ENCODE measurements at regions of chr19 and their contacts with region 1.

Region 1: GRCh38 chr19:2016041-2016807 is 710 bp upstream of the BTBD2 start:
- DNase-seq: peak; percentile 73
- ATAC-seq: peak; percentile 79
- H3K4me3 ChIP-seq: peak overlapping the region; percentile 34 to 37; a peak in 3 of 4 replicates
- H3K27ac ChIP-seq: peak overlapping the region; percentile 64
- H3K4me1 ChIP-seq: peaks cover 7 to 22% of the 10 kb centered on the region in 2 experiments; a peak in 3 of 4 replicates
- H3K27me3 ChIP-seq: no peaks in the 10 kb centered on the region
- CTCF ChIP-seq: no peak
- POLR2A ChIP-seq: no peak
- RAD21 ChIP-seq: no peak

Region 2: GRCh38 chr19:2056182-2056836 is 40.1 kb after region 1 on chr19:
- CTCF ChIA-PET with region 1: interaction called, 4 read pairs
- POLR2A ChIA-PET with region 1: interaction called, 4 read pairs
- RAD21 ChIA-PET with region 1: interaction called in 1 of 2 experiments, 11 read pairs
- intact Hi-C with region 1: no loop called
- DNase-seq: peak; percentile 53
- ATAC-seq: peak; percentile 9; the same call in 1 of the 2 replicates
- H3K4me3 ChIP-seq: peak overlapping the region; percentile 48 to 56
- H3K27ac ChIP-seq: peak overlapping the region; percentile 99
- H3K4me1 ChIP-seq: peaks cover 78 to 96% of the 10 kb centered on the region in 2 experiments
- H3K27me3 ChIP-seq: no peaks in the 10 kb centered on the region
- CTCF ChIP-seq: no peak
- POLR2A ChIP-seq: peak; percentile 23
- RAD21 ChIP-seq: no peak

Region 3: GRCh38 chr19:2096480-2097329 is 80.5 kb after region 1 on chr19 and contains the start of gene IZUMO4:
- CTCF ChIA-PET with region 1: interaction called, 3 read pairs
- POLR2A ChIA-PET with region 1: no interaction called
- RAD21 ChIA-PET with region 1: no interaction called
- intact Hi-C with region 1: loop called (anchors 1 kb)
- DNase-seq: peak; percentile 92
- ATAC-seq: peak; percentile 87
- H3K4me3 ChIP-seq: peak within 1 kb of the TSS; percentile 77 to 88
- H3K27ac ChIP-seq: peak within 1 kb of the TSS; percentile 99
- H3K4me1 ChIP-seq: peaks cover 11 to 24% of the 10 kb centered on the region in 2 experiments
- H3K27me3 ChIP-seq: no peaks in the 10 kb centered on the region
- CTCF ChIP-seq: peak in 2 of 3 experiments; percentile 30 to 40; a peak in 3 of 6 replicates
- POLR2A ChIP-seq: no peak
- RAD21 ChIP-seq: no peak; the same call in 1 of the 2 replicates
- total RNA-seq, gene IZUMO4: 6.1 TPM

Region 4: DNA sequence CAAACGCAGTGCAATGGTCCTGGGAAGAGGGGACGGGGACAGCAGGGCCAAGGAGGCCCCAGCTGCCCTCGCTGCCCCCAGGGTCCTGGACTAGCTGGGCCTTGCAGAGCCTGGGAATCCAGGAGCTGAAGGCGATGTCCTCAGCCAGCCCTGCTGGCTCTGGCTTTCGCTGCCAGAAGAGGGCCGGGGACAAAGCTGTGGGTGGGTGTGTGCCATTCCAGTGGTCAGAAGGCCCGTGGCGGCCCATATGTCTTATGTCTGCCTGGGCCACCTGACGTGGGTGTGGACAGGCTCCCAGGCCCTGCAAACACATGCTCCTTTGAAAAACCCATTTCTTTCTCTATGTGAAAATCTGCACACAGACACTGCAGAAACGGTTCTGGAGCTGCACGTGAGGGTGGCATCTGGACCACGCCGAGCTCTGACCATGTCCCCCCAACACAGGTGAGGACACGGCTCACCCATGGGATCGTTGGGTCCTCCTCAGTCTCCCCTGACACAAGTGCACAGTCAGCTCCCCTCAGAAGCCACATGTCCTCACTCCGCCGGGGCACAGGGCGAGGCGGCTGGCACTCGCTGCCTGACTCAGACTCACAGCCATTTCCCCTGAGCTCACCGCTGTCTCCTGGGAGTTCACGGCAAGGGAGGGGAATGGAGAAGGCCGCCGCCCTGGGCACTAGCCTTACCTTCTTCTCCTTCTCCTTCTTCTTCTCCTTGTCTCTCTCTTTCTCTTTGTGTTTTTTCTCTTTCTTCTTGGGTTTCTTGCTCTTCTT is 97.4 kb after region 1 on chr19:
- CTCF ChIA-PET with region 1: no interaction called
- POLR2A ChIA-PET with region 1: no interaction called
- RAD21 ChIA-PET with region 1: no interaction called
- intact Hi-C with region 1: no loop called
- DNase-seq: no peak
- ATAC-seq: no peak
- H3K4me3 ChIP-seq: no peak overlapping the region
- H3K27ac ChIP-seq: no peak overlapping the region
- H3K4me1 ChIP-seq: no peaks in the 10 kb centered on the region
- H3K27me3 ChIP-seq: no peaks in the 10 kb centered on the region
- CTCF ChIP-seq: no peak
- POLR2A ChIP-seq: no peak
- RAD21 ChIP-seq: no peak

Region 5: DNA sequence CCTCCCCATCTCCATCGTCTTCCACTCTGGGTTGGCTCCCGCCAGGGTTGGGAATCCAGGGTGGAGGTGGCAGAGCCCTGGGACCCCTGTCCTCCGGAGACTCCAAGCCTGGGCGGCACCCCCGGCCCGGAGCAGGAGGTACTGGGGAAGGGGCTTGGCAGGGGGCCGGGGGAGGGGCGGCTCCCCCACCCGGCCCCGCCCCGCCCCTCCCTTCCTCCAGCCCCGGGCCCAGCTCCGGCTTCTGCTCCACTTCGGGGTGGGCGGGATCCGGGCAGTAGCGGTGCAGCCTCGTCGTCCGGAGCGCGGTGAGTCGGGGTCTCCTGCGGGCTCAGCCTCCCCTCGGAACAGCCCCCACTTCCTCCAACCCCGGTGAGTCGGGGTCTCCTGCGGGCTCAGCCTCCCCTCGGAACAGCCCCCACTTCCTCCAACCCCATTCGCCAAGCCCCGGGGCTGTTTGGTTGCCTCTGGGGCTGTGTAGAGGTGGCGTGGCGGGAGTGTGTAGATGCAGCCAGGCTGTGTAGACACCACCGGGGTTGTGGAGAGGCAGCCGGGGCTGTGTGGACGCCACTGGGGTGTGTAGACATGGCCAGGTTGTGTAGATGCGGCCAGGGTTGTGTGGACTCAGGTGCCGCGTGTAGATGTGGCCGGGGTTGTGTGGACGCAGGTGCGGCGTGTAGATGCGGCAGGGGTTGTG is 343.9 kb after region 1 on chr19 and contains the start of gene TMPRSS9:
- CTCF ChIA-PET with region 1: no interaction called
- POLR2A ChIA-PET with region 1: no interaction called
- RAD21 ChIA-PET with region 1: no interaction called
- intact Hi-C with region 1: no loop called
- DNase-seq: no peak
- ATAC-seq: no peak
- H3K4me3 ChIP-seq: no peak within 1 kb of the TSS
- H3K27ac ChIP-seq: no peak within 1 kb of the TSS
- H3K4me1 ChIP-seq: no peaks in the 10 kb centered on the region
- H3K27me3 ChIP-seq: peaks cover 4% of the 10 kb centered on the region; the same call in 1 of the 2 replicates
- CTCF ChIP-seq: no peak
- POLR2A ChIP-seq: no peak
- RAD21 ChIP-seq: no peak
- total RNA-seq, gene TMPRSS9: not detected

Measured in HCT116 (cell line).